PC-9 (cell line): ENCODE measurements at regions of chr12 and their contacts with region 1.

Region 1: GRCh38 chr12:6735448-6736191 is 11.8 kb downstream of the COPS7A start:
- DNase-seq: peak; percentile 44 to 70
- H3K4me3 ChIP-seq: no peak overlapping the region
- H3K27ac ChIP-seq: no peak overlapping the region
- H3K4me1 ChIP-seq: no peaks in the 10 kb centered on the region; the same call in 1 of the 2 replicates
- H3K27me3 ChIP-seq: no peaks in the 10 kb centered on the region
- CTCF ChIP-seq: peak; percentile 84

Region 2: GRCh38 chr12:6816598-6816997 is 81.0 kb after region 1 on chr12:
- CTCF ChIA-PET with region 1: interaction called, 11 read pairs
- POLR2A ChIA-PET with region 1: no interaction called
- intact Hi-C with region 1: no loop called
- DNase-seq: no peak
- H3K4me3 ChIP-seq: no peak overlapping the region
- H3K27ac ChIP-seq: no peak overlapping the region
- H3K4me1 ChIP-seq: no peaks in the 10 kb centered on the region; the same call in 1 of the 2 replicates
- H3K27me3 ChIP-seq: peaks cover 50% of the 10 kb centered on the region
- CTCF ChIP-seq: no peak

Region 3: DNA sequence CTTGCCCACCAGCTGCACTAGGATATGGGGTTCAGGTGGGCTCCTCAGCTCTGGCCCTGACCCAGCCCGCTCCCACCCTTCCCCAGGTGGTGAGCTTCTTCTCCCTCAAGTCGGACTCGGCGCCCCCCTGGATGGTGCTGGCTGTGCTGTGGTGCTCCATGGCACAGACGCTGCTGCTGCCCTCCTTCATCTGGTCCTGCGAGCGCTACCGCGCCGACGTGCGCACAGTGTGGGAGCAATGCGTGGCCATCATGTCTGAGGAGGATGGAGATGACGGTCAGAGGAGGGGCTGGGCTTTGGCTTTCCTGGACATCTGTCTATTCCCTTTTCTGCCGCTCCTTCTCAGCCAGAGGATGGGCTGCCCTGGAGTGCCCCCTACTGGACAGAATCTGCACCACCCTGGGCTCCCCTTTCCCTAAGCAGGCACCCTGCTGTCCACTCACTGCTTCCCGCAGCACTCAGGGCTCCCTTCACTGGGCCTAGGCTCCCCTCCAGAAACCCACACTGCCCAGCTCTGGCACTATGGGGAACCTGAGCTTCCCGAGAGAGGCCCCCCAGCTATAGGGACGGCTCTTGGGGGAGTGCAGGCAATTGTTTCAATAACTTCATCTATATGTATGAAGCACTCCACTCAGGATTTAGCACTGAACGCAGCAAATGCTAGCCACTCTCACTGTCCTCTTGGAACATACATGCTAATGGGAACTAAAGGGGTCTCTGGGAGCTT is 89.9 kb after region 1 on chr12:
- CTCF ChIA-PET with region 1: interaction called, 3 read pairs
- POLR2A ChIA-PET with region 1: no interaction called
- intact Hi-C with region 1: loop called (anchors 1 kb)
- DNase-seq: peak; percentile 68 to 93
- H3K4me3 ChIP-seq: no peak overlapping the region
- H3K27ac ChIP-seq: no peak overlapping the region
- H3K4me1 ChIP-seq: no peaks in the 10 kb centered on the region; the same call in 1 of the 2 replicates
- H3K27me3 ChIP-seq: peaks cover 97% of the 10 kb centered on the region
- CTCF ChIP-seq: peak; percentile 96